ENCODE measurements at regions of chr2 and their contacts with region 1.

Region 1: DNA sequence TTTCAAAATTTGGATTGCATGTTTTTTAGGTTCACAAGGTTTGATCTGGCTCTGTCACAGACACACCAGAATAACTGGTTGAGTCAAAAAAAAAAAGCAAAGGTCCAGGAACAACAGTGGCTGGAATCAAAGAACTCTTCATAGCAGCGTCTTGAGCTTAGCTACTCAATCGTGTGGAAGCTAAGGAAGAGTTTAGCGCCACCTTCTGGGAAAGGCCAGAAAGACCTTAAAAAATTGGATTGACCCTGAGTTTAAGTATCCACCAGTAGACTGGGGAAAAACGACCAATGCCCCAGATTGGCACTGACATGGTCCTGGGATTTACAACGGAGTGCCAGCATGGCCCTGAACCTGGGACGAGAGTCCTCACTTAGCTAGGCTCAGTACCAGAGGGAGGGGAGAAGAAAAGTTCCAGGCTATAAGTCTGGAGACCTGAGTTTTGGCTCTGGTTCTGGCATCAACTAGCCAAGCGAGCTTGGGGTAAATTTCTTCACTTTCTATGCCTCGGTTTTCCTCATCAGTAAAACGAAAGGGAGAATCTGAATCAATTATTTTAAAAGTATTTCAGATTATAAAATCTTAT is 71.1 kb upstream of the TFCP2L1 start:
- DNase-seq: peak; percentile 62 to 70
- ATAC-seq: peak; percentile 82 to 94; a peak in 5 of 6 replicates
- H3K4me3 ChIP-seq: no peak overlapping the region
- H3K27ac ChIP-seq: no peak overlapping the region
- H3K4me1 ChIP-seq: peaks cover 10% of the 10 kb centered on the region
- CTCF ChIP-seq: peak; percentile 77
- EP300 ChIP-seq: no peak
- POLR2A ChIP-seq: no peak
- RAD21 ChIP-seq: peak; percentile 67 to 70

Region 2: DNA sequence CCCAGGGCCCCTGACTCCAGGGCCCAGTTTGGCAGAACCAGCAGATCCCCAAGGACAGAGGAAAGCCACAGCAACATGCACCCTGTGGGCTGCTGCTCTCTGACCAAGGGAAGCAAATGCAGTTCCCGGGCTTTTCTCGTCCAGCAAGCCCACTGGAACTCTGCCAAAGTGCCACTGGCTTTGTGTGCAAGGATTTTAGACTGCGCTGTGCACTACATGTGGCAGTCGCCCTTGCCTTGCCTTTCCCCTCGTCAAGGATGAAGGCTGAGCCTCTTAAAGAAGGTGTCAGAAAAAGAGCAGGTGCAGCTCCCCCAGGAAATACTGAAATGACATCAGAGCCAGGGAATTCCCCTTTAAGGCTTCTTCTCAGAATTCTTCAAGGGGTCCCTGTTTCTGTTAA is 270.3 kb before region 1 on chr2:
- CTCF ChIA-PET with region 1: interaction called, 47 read pairs
- POLR2A ChIA-PET with region 1: no interaction called
- DNase-seq: no peak
- ATAC-seq: no peak
- H3K4me3 ChIP-seq: no peak overlapping the region
- H3K27ac ChIP-seq: no peak overlapping the region
- H3K4me1 ChIP-seq: no peaks in the 10 kb centered on the region
- CTCF ChIP-seq: no peak
- EP300 ChIP-seq: no peak
- POLR2A ChIP-seq: no peak
- RAD21 ChIP-seq: no peak

Region 3: DNA sequence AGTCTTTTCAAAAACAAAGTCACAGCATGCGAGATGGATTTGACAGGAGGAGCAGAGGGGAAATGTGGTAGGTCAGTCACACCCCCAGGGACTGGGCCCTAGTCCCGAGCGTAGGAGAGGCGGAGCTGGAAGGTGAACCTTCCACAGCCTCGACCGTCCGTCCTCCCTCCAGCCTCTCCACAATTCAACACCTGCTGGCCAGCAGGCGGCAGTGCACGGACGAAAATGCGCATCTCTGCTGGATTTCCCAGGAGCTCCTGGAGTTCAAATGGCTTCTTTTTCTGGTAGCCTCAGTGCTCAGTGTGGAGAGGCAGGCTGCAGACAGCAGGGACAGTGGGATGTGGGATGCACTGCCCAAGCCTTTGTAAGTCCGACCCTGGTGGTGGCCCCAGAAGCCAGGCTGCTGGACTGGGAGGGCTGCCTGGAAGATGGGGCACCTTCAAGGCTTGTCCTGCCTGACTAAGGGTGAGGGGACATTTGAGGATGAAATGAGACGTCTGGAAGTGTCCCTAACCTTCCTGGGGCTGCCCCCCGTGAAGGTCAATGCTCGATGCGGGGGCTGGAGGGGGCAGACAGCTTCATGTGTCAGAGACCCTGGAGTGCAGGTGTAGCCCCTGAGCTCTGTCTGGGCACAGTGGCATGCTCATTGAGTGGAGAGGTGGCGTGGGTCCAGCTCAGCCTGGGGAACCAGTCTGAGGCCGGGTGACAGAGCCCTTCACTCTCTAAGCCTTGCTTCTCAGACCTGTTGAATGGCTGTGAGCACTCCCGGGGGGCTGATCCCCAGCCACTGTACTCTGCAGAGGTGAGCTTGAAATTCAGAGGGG is 260.7 kb before region 1 on chr2:
- CTCF ChIA-PET with region 1: interaction called, 117 read pairs
- POLR2A ChIA-PET with region 1: no interaction called
- DNase-seq: peak; percentile 79
- ATAC-seq: peak; percentile 87 to 94
- H3K4me3 ChIP-seq: no peak overlapping the region
- H3K27ac ChIP-seq: no peak overlapping the region
- H3K4me1 ChIP-seq: no peaks in the 10 kb centered on the region
- CTCF ChIP-seq: peak; percentile 78
- EP300 ChIP-seq: no peak
- POLR2A ChIP-seq: no peak
- RAD21 ChIP-seq: peak; percentile 81 to 87

Region 4: GRCh38 chr2:121128754-121129659 is 227.1 kb before region 1 on chr2:
- CTCF ChIA-PET with region 1: interaction called, 28 read pairs
- POLR2A ChIA-PET with region 1: no interaction called
- DNase-seq: peak; percentile 43 to 60
- ATAC-seq: peak; percentile 69 to 88; a peak in 5 of 6 replicates
- H3K4me3 ChIP-seq: no peak overlapping the region
- H3K27ac ChIP-seq: no peak overlapping the region
- H3K4me1 ChIP-seq: no peaks in the 10 kb centered on the region
- CTCF ChIP-seq: peak; percentile 59
- EP300 ChIP-seq: no peak
- POLR2A ChIP-seq: no peak
- RAD21 ChIP-seq: peak; percentile 73 to 82

Region 5: GRCh38 chr2:121345887-121346286 is 10.3 kb before region 1 on chr2:
- CTCF ChIA-PET with region 1: interaction called, 41 read pairs
- POLR2A ChIA-PET with region 1: no interaction called
- DNase-seq: no peak
- ATAC-seq: 0 out of 6 replicates have a peak, but pooled peaks of 1 of the 2 experiments have one; percentile 22
- H3K4me3 ChIP-seq: no peak overlapping the region
- H3K27ac ChIP-seq: no peak overlapping the region
- H3K4me1 ChIP-seq: no peaks in the 10 kb centered on the region
- CTCF ChIP-seq: no peak
- EP300 ChIP-seq: no peak
- POLR2A ChIP-seq: no peak
- RAD21 ChIP-seq: no peak

Region 6: DNA sequence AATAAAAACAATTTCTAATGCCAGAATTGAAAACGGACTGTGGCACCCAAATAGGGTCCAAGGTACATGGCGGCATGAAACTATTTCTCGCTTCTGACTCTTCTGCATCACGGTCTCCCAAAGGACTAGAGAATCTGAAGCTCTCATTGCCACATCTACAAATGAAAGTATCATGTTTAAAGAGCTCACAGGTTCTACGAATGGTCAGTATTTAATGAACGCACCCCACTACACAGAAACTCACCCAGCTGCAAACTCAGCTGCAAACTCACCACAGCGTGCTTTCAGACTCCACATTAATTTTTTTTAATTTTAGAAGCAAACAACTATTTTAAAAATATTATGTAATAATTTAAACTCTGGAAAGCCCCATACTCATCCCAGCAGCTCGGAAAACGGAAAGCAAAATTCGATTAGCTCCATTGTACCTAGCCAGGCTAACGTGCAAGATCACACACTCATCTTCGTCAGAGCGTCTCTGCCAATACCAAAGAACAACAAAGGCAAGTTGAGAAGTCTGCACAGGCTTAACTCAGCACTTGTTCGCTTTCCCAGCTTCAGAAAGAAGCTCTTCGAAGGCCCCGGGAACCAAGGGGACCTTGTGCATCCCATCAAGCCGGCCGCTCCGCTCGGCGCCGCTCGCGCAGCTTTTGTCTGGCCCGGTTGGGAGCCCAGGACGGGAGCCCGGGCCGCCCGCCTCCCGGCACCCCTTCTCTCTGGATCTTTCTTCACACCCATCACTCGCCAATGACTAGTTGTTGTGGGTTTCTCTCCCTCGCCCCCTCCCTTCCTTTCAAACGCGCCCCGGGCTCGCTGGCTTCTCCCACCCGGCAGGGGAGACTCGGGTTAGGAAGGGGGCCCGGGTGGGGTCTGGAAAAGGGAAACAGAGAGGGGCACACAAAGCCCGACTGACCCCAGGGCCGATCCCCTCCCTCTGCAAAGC is 292.3 kb after region 1 on chr2:
- CTCF ChIA-PET with region 1: no interaction called
- POLR2A ChIA-PET with region 1: no interaction called
- DNase-seq: peak; percentile 34 to 40
- ATAC-seq: peak; percentile 62 to 66
- H3K4me3 ChIP-seq: peak overlapping the region; percentile 73
- H3K27ac ChIP-seq: peak overlapping the region; percentile 91 to 93
- H3K4me1 ChIP-seq: peaks cover 20% of the 10 kb centered on the region
- CTCF ChIP-seq: no peak
- EP300 ChIP-seq: no peak
- POLR2A ChIP-seq: no peak
- RAD21 ChIP-seq: no peak

Region 7: DNA sequence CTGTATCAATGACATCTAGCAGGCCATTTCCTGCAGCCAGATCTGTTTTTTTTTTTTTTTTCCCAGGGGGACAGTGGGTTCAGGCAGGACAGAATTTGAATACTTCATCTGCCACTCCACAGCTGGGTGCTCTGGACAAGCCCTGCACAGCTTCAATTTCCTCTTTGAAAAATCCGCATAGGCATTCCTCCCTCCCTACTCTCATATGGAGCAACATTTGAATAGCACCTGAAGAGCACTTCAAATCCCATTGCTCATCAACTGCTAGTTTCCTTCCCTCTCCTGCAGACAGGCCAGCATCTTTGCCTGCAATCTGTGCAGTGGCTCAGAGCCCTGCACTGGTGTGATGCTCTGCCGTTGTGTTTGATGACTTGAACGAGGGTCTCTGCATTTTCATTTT is 725.6 kb after region 1 on chr2:
- CTCF ChIA-PET with region 1: no interaction called
- POLR2A ChIA-PET with region 1: no interaction called
- DNase-seq: no peak
- ATAC-seq: no peak
- H3K4me3 ChIP-seq: no peak overlapping the region
- H3K27ac ChIP-seq: no peak overlapping the region
- H3K4me1 ChIP-seq: no peaks in the 10 kb centered on the region
- CTCF ChIP-seq: no peak
- EP300 ChIP-seq: no peak
- POLR2A ChIP-seq: no peak
- RAD21 ChIP-seq: no peak

Measured in A549 (cell line).